ENCODE measurements at regions of chr3 and their contacts with region 1.

Region 1: GRCh38 chr3:71583566-71584449 is at the start of gene FOXP1:
- DNase-seq: peak; percentile 63 to 89
- ATAC-seq: peak; percentile 60 to 75 (median 67)
- H3K4me3 ChIP-seq: peak within 1 kb of the TSS; percentile 77
- H3K4me3 Mint-ChIP-seq: peak within 1 kb of the TSS; percentile 98
- H3K27ac ChIP-seq: peak within 1 kb of the TSS; percentile 80
- H3K27ac Mint-ChIP-seq: peak within 1 kb of the TSS; percentile 90 to 94
- H3K4me1 ChIP-seq: peaks cover 25% of the 10 kb centered on the region
- H3K4me1 Mint-ChIP-seq: peaks cover 27 to 47% of the 10 kb centered on the region in 2 donors
- H3K27me3 ChIP-seq: no peaks in the 10 kb centered on the region
- H3K27me3 Mint-ChIP-seq: peaks cover 6 to 11% of the 10 kb centered on the region in 2 donors
- CTCF ChIP-seq: no peak
- total RNA-seq, gene FOXP1: 166 to 185 (median 166) TPM

Region 2: DNA sequence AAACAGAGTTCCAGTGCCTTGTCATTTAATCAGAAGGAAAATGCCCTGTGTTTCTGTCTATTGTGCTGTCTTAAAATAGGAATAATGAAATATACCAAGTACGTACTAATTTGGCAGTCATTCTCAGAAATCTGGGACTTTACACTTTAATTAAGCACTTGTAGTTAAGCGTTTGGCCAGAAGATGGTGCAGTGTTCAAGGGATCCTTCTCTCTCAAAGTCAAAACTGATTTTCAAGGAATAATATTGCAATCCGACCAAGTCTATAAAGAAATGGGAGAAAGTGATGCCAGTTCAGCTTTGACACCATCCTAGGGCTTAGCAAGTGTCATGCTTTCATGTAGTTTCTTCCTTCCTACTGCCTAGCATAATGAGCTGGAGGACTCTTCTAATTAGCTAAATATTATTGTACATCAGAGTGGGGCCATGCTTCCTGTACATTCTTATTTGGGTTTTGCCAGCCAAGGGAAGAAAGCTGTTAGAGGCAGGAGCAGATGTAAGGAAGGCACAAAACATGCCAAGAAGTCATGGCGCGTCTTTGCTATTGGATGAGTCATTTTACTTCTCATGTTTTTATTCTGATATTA is 1519.5 kb before region 1 on chr3:
- intact Hi-C with region 1: loop called (anchors 10 kb)
- DNase-seq: peak in 1 of 2 donors; percentile 42
- ATAC-seq: no peak
- H3K4me3 ChIP-seq: no peak overlapping the region
- H3K4me3 Mint-ChIP-seq: no peak overlapping the region
- H3K27ac ChIP-seq: no peak overlapping the region
- H3K27ac Mint-ChIP-seq: no peak overlapping the region
- H3K4me1 ChIP-seq: no peaks in the 10 kb centered on the region
- H3K4me1 Mint-ChIP-seq: no peaks in the 10 kb centered on the region
- H3K27me3 ChIP-seq: no peaks in the 10 kb centered on the region
- H3K27me3 Mint-ChIP-seq: no peaks in the 10 kb centered on the region
- CTCF ChIP-seq: peak; percentile 12

Region 3: DNA sequence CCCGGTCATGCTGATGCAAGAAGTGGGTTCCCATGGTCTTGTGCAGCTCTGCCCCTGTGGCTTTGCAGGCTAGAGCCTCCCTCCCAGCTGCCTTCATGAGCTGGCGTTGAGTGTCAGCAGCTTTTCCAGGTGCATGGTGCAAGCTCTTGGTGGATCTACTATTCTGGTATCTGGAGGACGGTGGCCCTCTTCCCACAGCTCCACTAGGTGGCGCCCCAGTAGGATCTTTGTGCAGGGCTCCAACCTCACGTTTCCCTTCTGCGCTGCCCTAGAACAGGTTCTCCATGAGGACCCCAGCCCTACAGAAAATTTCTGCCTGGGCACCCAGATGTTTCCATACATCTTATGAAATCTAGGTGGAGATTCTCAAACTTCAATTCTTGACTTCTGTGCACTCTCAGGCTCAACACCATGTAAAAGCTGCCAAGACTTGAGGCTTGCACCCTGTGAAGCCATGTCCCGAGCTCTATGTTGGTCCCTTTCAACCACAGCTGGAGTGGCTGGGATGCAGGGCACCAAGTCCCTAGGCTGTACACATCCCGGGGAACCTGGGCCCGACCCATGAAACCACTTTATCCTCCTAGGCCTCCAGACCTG is 1033.0 kb before region 1 on chr3:
- intact Hi-C with region 1: loop called (anchors 1 kb)
- DNase-seq: peak; percentile 47 to 83
- ATAC-seq: peak; percentile 44 to 80 (median 67)
- H3K4me3 ChIP-seq: no peak overlapping the region
- H3K4me3 Mint-ChIP-seq: no peak overlapping the region
- H3K27ac ChIP-seq: no peak overlapping the region
- H3K27ac Mint-ChIP-seq: no peak overlapping the region
- H3K4me1 ChIP-seq: no peaks in the 10 kb centered on the region
- H3K4me1 Mint-ChIP-seq: no peaks in the 10 kb centered on the region
- H3K27me3 ChIP-seq: no peaks in the 10 kb centered on the region
- H3K27me3 Mint-ChIP-seq: no peaks in the 10 kb centered on the region
- CTCF ChIP-seq: peak; percentile 58

Region 4: DNA sequence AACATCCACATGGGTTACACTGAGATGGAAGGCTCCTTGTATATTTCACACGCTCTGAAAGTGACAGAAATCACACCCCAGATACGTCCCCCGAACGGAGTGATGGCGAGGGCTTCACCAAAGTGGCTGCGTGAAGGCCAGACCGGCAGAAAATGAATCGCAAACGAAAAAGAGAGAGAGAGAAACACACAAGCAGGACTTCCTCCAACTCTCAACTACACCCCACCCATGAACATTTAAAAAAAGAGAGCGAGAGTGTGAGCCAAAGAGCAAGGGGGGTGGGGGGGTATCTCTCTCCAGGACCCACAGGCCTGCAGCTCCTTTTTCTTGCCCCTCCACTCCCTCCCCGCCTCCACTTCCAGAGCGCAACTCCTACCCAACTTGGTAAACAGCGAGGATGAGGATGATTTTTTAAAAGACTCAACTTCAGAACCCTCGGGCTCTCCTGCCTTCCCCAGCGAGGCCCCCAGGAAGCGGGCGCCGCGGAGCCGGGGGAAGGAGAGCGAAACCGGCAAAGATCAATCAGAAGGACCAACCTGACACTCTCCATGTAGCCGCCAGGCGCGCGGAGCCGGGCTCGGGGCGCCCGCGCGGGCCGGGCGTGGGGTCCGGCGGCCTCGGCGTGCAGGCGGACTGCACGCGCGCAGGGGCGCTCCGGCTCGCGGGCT is 519.4 kb before region 1 on chr3:
- intact Hi-C with region 1: loop called (anchors 1 kb)
- DNase-seq: peak; percentile 64 to 80
- ATAC-seq: peak; percentile 37 to 68 (median 55)
- H3K4me3 ChIP-seq: peak overlapping the region; percentile 55
- H3K4me3 Mint-ChIP-seq: no peak overlapping the region
- H3K27ac ChIP-seq: peak overlapping the region; percentile 82
- H3K27ac Mint-ChIP-seq: no peak overlapping the region
- H3K4me1 ChIP-seq: peaks cover 33% of the 10 kb centered on the region
- H3K4me1 Mint-ChIP-seq: peaks cover 35 to 38% of the 10 kb centered on the region in 2 donors
- H3K27me3 ChIP-seq: no peaks in the 10 kb centered on the region
- H3K27me3 Mint-ChIP-seq: no peaks in the 10 kb centered on the region
- CTCF ChIP-seq: no peak

Region 5: GRCh38 chr3:71226565-71227269 is 357.1 kb before region 1 on chr3:
- intact Hi-C with region 1: loop called (anchors 1 kb)
- DNase-seq: peak; percentile 81
- ATAC-seq: peak; percentile 78 to 85 (median 85)
- H3K4me3 ChIP-seq: peak overlapping the region; percentile 2
- H3K4me3 Mint-ChIP-seq: peak overlapping the region; percentile 96
- H3K27ac ChIP-seq: peak overlapping the region; percentile 52
- H3K27ac Mint-ChIP-seq: peak overlapping the region; percentile 82 to 95
- H3K4me1 ChIP-seq: peaks cover 22% of the 10 kb centered on the region
- H3K4me1 Mint-ChIP-seq: peaks cover 24 to 27% of the 10 kb centered on the region in 2 donors
- H3K27me3 ChIP-seq: no peaks in the 10 kb centered on the region
- H3K27me3 Mint-ChIP-seq: peaks cover 5 to 13% of the 10 kb centered on the region in 2 donors
- CTCF ChIP-seq: no peak

Region 6: GRCh38 chr3:71389911-71390573 is 193.8 kb before region 1 on chr3:
- intact Hi-C with region 1: loop called (anchors 1 kb)
- DNase-seq: peak in 1 of 2 donors; percentile 64
- ATAC-seq: peak in 2 of 3 donors; percentile 11 to 27
- H3K4me3 ChIP-seq: no peak overlapping the region
- H3K4me3 Mint-ChIP-seq: peak overlapping the region; percentile 64
- H3K27ac ChIP-seq: peak overlapping the region; percentile 93
- H3K27ac Mint-ChIP-seq: peak overlapping the region; percentile 38 to 44
- H3K4me1 ChIP-seq: peaks cover 15% of the 10 kb centered on the region
- H3K4me1 Mint-ChIP-seq: peaks cover 28 to 33% of the 10 kb centered on the region in 2 donors
- H3K27me3 ChIP-seq: no peaks in the 10 kb centered on the region
- H3K27me3 Mint-ChIP-seq: no peaks in the 10 kb centered on the region
- CTCF ChIP-seq: no peak

Region 7: GRCh38 chr3:71495708-71496472 is 87.9 kb before region 1 on chr3:
- intact Hi-C with region 1: loop called (anchors 2 kb)
- DNase-seq: peak in 1 of 2 donors; percentile 67
- ATAC-seq: peak; percentile 41 to 63 (median 62)
- H3K4me3 ChIP-seq: no peak overlapping the region
- H3K4me3 Mint-ChIP-seq: peak overlapping the region; percentile 84
- H3K27ac ChIP-seq: peak overlapping the region; percentile 60
- H3K27ac Mint-ChIP-seq: peak overlapping the region; percentile 86 to 95
- H3K4me1 ChIP-seq: peaks cover 35% of the 10 kb centered on the region
- H3K4me1 Mint-ChIP-seq: peaks cover 57 to 67% of the 10 kb centered on the region in 2 donors
- H3K27me3 ChIP-seq: no peaks in the 10 kb centered on the region
- H3K27me3 Mint-ChIP-seq: no peaks in the 10 kb centered on the region
- CTCF ChIP-seq: no peak